ENCODE measurements at regions of chr7 and their contacts with region 1.

Region 1: DNA sequence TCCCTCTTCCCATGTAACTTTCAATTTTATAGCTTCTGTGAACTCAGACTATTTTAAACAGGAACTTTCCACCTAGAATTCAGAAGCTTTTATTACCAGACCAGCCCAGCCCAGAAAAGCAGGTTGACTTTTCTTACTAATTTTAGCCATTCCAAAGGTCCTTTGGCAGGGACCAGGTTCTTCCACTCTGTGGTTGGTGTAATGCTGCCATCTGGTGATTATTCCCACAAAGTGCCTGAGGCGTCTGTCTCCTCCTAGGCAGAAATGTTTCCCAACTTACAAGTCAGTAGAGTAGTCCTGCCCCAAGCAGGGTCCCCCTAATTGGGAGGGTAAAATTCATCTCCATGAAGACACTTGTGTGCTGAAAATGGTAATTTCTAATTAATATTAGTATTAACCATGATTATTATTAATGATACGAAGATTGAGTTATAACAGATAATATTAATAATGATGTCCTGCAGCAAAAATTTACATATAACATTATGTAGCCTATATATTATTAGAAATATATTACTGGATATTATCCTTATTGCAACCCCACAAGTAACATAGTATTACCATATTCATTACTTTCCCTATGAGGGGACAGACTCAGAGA is 53.0 kb upstream of the PPP1R17 start:
- DNase-seq: peak; percentile 28
- ATAC-seq: peak; percentile 79 to 84

Region 2: DNA sequence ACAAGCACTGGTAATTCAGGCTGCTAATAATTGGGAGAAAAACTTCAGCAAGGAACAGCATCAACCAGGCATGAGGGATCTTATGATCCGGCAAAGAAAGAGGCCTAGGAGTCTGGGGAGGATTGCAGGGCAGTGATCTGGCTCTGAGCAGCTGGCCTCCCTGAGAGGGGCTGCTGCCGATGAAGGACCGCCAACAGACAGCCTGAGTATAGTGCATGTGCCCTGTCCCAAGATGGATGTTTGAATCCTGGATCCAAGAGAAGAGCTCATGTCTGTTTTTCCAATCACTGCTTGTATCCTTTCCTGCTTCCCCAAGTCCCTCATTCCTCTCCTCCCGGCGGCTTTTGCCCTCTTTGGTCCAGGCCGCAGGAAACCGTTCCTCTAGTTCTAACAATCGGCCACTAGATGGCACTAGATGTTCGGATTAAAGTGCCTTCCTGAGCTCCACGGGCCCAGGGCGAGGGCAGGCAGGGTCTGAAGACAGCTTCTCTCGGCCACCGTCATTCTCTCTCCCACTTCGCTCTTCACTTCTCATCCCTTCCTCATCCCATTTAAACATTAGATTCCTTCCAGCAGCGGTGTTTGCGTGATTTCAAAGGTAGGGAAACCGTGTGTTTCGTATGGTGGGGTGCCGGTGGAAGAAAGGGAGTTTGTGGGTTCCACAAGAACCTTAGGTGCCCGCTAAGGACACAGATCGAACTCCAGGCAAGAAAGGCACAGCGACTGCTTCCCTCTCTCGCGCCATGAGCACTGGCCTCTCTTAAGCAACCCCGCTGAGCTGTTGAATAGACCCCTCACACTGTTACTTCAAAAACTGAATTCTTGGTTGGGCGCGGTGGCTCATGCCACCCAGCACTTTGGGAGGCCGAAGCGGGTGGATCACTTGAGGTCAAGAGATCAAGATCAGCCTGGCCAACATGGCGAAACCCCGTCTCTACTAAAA is 499.5 kb before region 1 on chr7:
- intact Hi-C with region 1: loop called in 1 of 2 experiments (anchors 10 kb)
- DNase-seq: peak; percentile 77
- ATAC-seq: peak; percentile 95 to 98

Region 3: GRCh38 chr7:31192986-31193385 is 441.0 kb before region 1 on chr7:
- intact Hi-C with region 1: loop called in 1 of 2 experiments (anchors 5 kb)
- DNase-seq: peak; percentile 69
- ATAC-seq: peak; percentile 80 to 89

Region 4: DNA sequence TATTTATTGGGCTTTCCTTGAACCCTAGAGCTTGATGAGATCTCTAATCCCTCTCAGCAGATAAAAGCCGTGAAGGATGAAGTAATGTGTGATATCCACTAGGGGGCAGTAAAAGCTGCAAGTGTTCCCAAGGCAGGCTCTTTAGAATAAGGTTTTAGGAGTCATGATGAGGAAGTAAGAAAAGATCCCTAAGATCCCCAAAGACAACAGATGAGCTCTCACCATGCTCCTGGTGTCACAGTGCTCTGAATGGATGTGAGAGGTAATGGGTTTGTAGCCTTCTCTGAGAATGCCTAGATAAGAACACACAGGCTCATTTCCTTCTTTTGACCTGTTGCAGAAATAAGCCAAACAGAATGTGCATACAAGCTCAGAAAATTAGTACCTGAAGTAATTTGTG is 190.5 kb before region 1 on chr7:
- intact Hi-C with region 1: loop called in 1 of 2 experiments (anchors 2 kb)
- DNase-seq: no peak
- ATAC-seq: peak; percentile 47 to 66

Region 5: GRCh38 chr7:31613604-31614003 is 20.4 kb before region 1 on chr7:
- intact Hi-C with region 1: no loop called
- DNase-seq: no peak
- ATAC-seq: no peak